SK-N-SH (cell line): ENCODE measurements at regions of chr15 and their contacts with region 1.

Region 1: GRCh38 chr15:89760303-89761008 is 9.4 kb upstream of the MESP1 start:
- DNase-seq: peak; percentile 90
- H3K4me3 ChIP-seq: peak overlapping the region in 1 of 2 experiments; percentile 35; a peak in 1 of 4 replicates
- H3K27ac ChIP-seq: peak overlapping the region in 1 of 2 experiments; percentile 39; a peak in 1 of 4 replicates
- H3K4me1 ChIP-seq: peaks cover 4 to 20% of the 10 kb centered on the region in 2 experiments; a peak in 1 of 4 replicates
- H3K27me3 ChIP-seq: no peaks in the 10 kb centered on the region
- CTCF ChIP-seq: peak; percentile 95
- EP300 ChIP-seq: peak in 1 of 2 experiments; percentile 46; a peak in 1 of 4 replicates
- RAD21 ChIP-seq: peak; percentile 90

Region 2: DNA sequence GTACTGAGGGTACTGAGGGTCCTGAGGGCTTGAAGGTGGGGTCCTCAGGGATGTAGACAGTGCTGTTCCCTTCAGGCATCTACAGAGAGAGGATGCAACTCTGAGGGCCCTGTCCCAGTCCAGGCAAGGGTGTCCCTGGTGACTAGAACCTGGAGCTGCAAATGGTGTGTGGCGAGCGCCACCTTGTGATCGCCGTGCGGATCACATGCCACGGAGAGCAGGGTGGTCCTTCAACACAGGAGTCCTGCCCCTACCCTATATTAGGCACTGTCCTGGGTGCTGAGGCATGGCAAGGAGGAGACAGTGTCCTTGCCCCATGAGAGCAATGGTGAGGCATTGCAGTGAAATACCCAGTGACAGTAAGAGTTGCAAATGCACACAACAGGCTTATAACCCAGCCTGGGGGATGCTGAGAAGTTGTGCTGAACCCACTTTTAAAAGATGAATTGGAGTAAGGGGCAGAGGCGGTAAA is 287.6 kb before region 1 on chr15:
- CTCF ChIA-PET with region 1: no interaction called
- POLR2A ChIA-PET with region 1: no interaction called
- DNase-seq: peak; percentile 91
- H3K4me3 ChIP-seq: no peak overlapping the region; a peak in 1 of 4 replicates
- H3K27ac ChIP-seq: no peak overlapping the region
- H3K4me1 ChIP-seq: peaks cover 2 to 5% of the 10 kb centered on the region in 2 experiments; a peak in 2 of 4 replicates
- H3K27me3 ChIP-seq: no peaks in the 10 kb centered on the region
- CTCF ChIP-seq: peak; percentile 85
- EP300 ChIP-seq: no peak
- RAD21 ChIP-seq: peak; percentile 96

Region 3: DNA sequence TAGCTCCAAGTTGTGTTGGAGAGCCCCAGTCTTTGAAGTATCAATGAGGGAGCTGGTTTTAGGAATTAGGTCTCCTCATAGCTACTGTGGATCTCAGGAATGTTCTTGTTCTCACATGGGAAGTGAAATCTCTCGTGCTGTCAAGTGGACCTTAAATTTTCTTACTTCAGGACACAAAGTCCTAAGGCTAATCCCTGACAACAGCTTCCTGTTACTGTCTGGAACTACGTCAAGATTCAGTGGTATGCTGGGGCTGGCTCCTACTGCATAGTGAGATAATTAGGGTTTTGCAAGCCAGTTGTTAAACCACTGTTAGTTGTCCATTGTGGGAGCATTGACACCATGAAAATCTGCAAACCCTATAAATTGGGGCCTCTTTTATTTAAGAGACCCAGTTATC is 32.2 kb before region 1 on chr15:
- CTCF ChIA-PET with region 1: interaction called, 11 read pairs
- POLR2A ChIA-PET with region 1: no interaction called
- DNase-seq: no peak
- H3K4me3 ChIP-seq: no peak overlapping the region
- H3K27ac ChIP-seq: no peak overlapping the region
- H3K4me1 ChIP-seq: no peaks in the 10 kb centered on the region
- H3K27me3 ChIP-seq: peaks cover 14% of the 10 kb centered on the region
- CTCF ChIP-seq: no peak
- EP300 ChIP-seq: no peak
- RAD21 ChIP-seq: no peak

Region 4: GRCh38 chr15:89740137-89740536 is 20.3 kb before region 1 on chr15:
- CTCF ChIA-PET with region 1: interaction called, 20 read pairs
- POLR2A ChIA-PET with region 1: no interaction called
- DNase-seq: peak; percentile 84
- H3K4me3 ChIP-seq: no peak overlapping the region; a peak in 1 of 4 replicates
- H3K27ac ChIP-seq: no peak overlapping the region
- H3K4me1 ChIP-seq: no peaks in the 10 kb centered on the region
- H3K27me3 ChIP-seq: no peaks in the 10 kb centered on the region; the same call in 1 of the 2 replicates
- CTCF ChIP-seq: peak; percentile 85
- EP300 ChIP-seq: no peak
- RAD21 ChIP-seq: peak; percentile 92

Region 5: GRCh38 chr15:89776274-89777072 is 16.0 kb after region 1 on chr15 and contains the start of gene MESP2:
- CTCF ChIA-PET with region 1: interaction called, 61 read pairs
- POLR2A ChIA-PET with region 1: no interaction called
- DNase-seq: peak; percentile 94
- H3K4me3 ChIP-seq: peak within 1 kb of the TSS; percentile 32 to 37; a peak in 3 of 4 replicates
- H3K27ac ChIP-seq: no peak within 1 kb of the TSS
- H3K4me1 ChIP-seq: peaks cover 0 to 6% of the 10 kb centered on the region in 2 experiments; a peak in 1 of 4 replicates
- H3K27me3 ChIP-seq: no peaks in the 10 kb centered on the region
- CTCF ChIP-seq: peak; percentile 31
- EP300 ChIP-seq: no peak
- RAD21 ChIP-seq: no peak
- polyA plus RNA-seq, gene MESP2: 0.21 and 0.31 TPM in 2 replicates

Region 6: GRCh38 chr15:89802231-89802928 is 41.9 kb after region 1 on chr15:
- CTCF ChIA-PET with region 1: interaction called, 10 read pairs
- POLR2A ChIA-PET with region 1: no interaction called
- DNase-seq: peak; percentile 24
- H3K4me3 ChIP-seq: no peak overlapping the region
- H3K27ac ChIP-seq: no peak overlapping the region
- H3K4me1 ChIP-seq: no peaks in the 10 kb centered on the region
- H3K27me3 ChIP-seq: no peaks in the 10 kb centered on the region
- CTCF ChIP-seq: no peak
- EP300 ChIP-seq: no peak
- RAD21 ChIP-seq: no peak

Region 7: DNA sequence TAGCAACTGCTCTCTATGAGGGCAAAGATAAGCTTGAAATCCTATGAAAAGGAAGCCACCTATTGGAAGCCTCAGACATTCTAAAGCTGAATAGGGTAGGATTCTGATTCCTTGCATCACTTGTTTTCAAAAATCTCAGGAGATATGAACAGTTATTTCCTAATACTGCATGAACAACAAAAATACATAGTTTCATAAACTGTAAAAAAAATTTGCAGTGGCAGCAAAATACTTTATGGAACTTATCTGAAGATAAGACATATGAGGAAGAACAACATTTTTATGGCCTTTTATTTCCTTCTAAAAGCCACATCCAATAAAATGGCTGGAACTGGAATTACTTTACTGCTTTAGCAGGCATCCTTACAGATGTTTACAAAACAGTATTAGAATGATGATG is 103.5 kb after region 1 on chr15:
- CTCF ChIA-PET with region 1: interaction called, 11 read pairs
- POLR2A ChIA-PET with region 1: no interaction called
- DNase-seq: no peak
- H3K4me3 ChIP-seq: no peak overlapping the region
- H3K27ac ChIP-seq: no peak overlapping the region
- H3K4me1 ChIP-seq: peaks cover 0 to 2% of the 10 kb centered on the region in 2 experiments; a peak in 1 of 4 replicates
- H3K27me3 ChIP-seq: no peaks in the 10 kb centered on the region
- CTCF ChIP-seq: no peak
- EP300 ChIP-seq: no peak
- RAD21 ChIP-seq: no peak

Region 8: GRCh38 chr15:89888214-89888804 is 127.9 kb after region 1 on chr15:
- CTCF ChIA-PET with region 1: interaction called, 48 read pairs
- POLR2A ChIA-PET with region 1: no interaction called
- DNase-seq: no peak
- H3K4me3 ChIP-seq: no peak overlapping the region
- H3K27ac ChIP-seq: no peak overlapping the region
- H3K4me1 ChIP-seq: peaks cover 0 to 2% of the 10 kb centered on the region in 2 experiments; a peak in 1 of 4 replicates
- H3K27me3 ChIP-seq: no peaks in the 10 kb centered on the region
- CTCF ChIP-seq: peak; percentile 67
- EP300 ChIP-seq: no peak
- RAD21 ChIP-seq: peak; percentile 59

Region 9: DNA sequence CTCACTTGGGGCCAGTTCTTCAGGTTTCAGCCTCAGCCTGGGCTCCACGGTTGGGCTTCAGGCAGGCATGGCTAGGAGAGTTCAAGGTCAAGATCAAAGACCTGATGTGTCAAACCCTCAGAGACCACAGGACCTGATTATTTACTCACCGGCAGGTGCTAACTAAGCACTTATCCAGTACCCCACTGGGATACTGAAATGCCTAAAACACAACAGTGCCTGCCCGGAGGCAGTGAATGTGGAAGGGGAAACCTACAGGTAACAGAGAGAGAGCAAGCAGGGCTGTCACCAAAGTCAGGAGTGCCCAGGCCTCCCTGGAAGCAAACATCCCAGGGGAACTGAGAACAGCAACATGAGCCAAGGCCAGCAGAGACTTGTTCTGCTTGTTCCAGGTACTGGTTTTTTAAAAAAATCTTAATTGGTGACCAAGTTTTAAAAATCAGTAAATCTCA is 335.1 kb after region 1 on chr15:
- CTCF ChIA-PET with region 1: no interaction called
- POLR2A ChIA-PET with region 1: no interaction called
- DNase-seq: no peak
- H3K4me3 ChIP-seq: no peak overlapping the region
- H3K27ac ChIP-seq: no peak overlapping the region
- H3K4me1 ChIP-seq: peaks cover 5 to 19% of the 10 kb centered on the region in 2 experiments; a peak in 2 of 4 replicates
- H3K27me3 ChIP-seq: no peaks in the 10 kb centered on the region
- CTCF ChIP-seq: no peak
- EP300 ChIP-seq: no peak
- RAD21 ChIP-seq: no peak

Region 10: GRCh38 chr15:90241343-90242192 is 481.1 kb after region 1 on chr15:
- CTCF ChIA-PET with region 1: no interaction called
- POLR2A ChIA-PET with region 1: no interaction called
- DNase-seq: no peak
- H3K4me3 ChIP-seq: no peak overlapping the region
- H3K27ac ChIP-seq: no peak overlapping the region
- H3K4me1 ChIP-seq: no peaks in the 10 kb centered on the region
- H3K27me3 ChIP-seq: no peaks in the 10 kb centered on the region
- CTCF ChIP-seq: no peak
- EP300 ChIP-seq: no peak
- RAD21 ChIP-seq: no peak